GM12878 (cell line): ENCODE measurements at regions of chr2 and their contacts with region 1.

Region 1: DNA sequence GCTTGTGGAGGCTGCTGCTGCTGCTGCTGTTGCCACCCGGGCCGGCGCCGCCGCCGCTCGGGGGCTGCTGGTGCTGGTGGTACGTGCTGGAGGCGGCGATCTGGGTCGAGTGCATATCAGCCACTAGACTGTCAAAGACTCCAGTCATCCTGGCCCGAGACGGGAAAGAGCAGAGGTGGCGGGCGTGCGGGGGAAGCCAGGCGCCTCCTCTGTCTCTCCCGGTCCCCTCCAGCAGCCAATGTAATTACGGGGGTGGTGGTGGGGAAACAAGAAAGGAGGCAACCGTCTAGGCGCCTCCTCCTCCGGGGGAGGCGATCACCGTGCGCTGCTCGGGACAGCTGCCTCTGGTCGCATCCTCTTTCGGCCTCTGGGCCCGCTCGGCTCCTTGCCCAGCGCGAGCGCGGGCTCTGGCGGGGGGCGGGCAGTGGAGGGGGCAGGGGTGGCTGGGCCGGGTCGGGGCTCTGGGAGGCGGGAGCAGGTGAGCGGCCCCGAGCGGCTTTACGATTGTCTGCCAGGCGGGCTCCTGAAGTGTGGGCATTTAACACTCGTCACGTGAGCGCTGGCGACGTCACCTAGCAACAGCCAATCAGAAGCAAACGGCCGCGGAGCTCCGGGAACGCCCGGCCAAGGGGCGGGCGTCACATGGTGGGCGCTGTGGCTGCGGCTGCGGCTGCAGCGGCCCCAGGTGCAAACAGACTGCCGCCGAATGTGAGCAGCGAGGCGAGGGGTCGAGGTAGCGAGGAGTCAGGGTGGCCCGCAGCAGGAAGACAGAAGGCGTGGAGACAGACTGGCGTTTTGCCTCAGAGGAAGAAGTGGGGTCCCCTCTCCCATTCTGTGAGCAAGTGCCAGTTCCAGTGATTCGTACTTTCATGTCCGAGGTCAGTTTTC is at the start of gene DLX2:
- DNase-seq: no peak
- ATAC-seq: peak; percentile 82
- H3K4me3 ChIP-seq: peak within 1 kb of the TSS; percentile 56
- H3K27ac ChIP-seq: no peak within 1 kb of the TSS
- H3K4me1 ChIP-seq: peaks cover 30% of the 10 kb centered on the region
- H3K27me3 ChIP-seq: peaks cover 27 to 39% of the 10 kb centered on the region in 2 experiments
- CTCF ChIP-seq: no peak
- EP300 ChIP-seq: no peak
- POLR2A ChIP-seq: peak; percentile 47; the same call in 1 of the 2 replicates
- RAD21 ChIP-seq: no peak
- polyA plus RNA-seq, gene DLX2: not detected

Region 2: GRCh38 chr2:171574149-171574795 is 528.4 kb before region 1 on chr2:
- CTCF ChIA-PET with region 1: interaction called, 10 read pairs
- POLR2A ChIA-PET with region 1: no interaction called
- RAD21 ChIA-PET with region 1: interaction called, 6 read pairs
- SMC1A ChIA-PET with region 1: interaction called, 4 read pairs
- in situ Hi-C with region 1: no loop called
- intact Hi-C with region 1: loop called (anchors 2 kb)
- DNase-seq: peak; percentile 32
- ATAC-seq: peak; percentile 100
- H3K4me3 ChIP-seq: no peak overlapping the region
- H3K27ac ChIP-seq: no peak overlapping the region
- H3K4me1 ChIP-seq: no peaks in the 10 kb centered on the region
- H3K27me3 ChIP-seq: peaks cover 0 to 1% of the 10 kb centered on the region in 2 experiments; a peak in 1 of 4 replicates
- CTCF ChIP-seq: peak; percentile 94 to 97 (median 95); a peak in 5 of 6 replicates
- EP300 ChIP-seq: no peak
- POLR2A ChIP-seq: no peak
- RAD21 ChIP-seq: peak; percentile 81

Region 3: DNA sequence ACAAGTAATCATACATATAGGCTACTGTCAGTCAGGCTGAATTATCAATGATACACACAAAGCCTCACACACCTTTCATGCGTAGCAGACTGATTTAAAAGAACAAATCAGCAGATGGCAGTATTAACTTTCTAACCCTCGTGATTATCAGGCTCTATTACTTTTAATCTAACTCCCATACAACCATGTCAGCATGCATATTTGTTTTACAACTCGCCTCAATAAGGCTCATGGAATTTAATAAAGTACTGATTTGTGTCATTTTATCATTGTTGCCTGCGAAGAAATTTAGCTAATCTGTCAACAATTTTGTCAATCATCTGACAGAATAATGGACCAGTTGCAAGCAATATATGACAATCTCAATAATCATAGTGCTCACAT is 291.4 kb before region 1 on chr2:
- CTCF ChIA-PET with region 1: interaction called, 48 read pairs
- POLR2A ChIA-PET with region 1: no interaction called
- RAD21 ChIA-PET with region 1: interaction called, 3 read pairs
- SMC1A ChIA-PET with region 1: interaction called, 9 read pairs
- in situ Hi-C with region 1: loop called (anchors 25 kb)
- intact Hi-C with region 1: loop called (anchors 2 kb)
- DNase-seq: no peak
- ATAC-seq: 0 out of 3 replicates have a peak, but pooled peaks have one; percentile 25
- H3K4me3 ChIP-seq: no peak overlapping the region
- H3K27ac ChIP-seq: no peak overlapping the region
- H3K4me1 ChIP-seq: no peaks in the 10 kb centered on the region
- H3K27me3 ChIP-seq: no peaks in the 10 kb centered on the region
- CTCF ChIP-seq: peak in 2 of 3 experiments; percentile 35 to 48; a peak in 3 of 6 replicates
- EP300 ChIP-seq: no peak
- POLR2A ChIP-seq: no peak
- RAD21 ChIP-seq: peak; percentile 67

Region 4: DNA sequence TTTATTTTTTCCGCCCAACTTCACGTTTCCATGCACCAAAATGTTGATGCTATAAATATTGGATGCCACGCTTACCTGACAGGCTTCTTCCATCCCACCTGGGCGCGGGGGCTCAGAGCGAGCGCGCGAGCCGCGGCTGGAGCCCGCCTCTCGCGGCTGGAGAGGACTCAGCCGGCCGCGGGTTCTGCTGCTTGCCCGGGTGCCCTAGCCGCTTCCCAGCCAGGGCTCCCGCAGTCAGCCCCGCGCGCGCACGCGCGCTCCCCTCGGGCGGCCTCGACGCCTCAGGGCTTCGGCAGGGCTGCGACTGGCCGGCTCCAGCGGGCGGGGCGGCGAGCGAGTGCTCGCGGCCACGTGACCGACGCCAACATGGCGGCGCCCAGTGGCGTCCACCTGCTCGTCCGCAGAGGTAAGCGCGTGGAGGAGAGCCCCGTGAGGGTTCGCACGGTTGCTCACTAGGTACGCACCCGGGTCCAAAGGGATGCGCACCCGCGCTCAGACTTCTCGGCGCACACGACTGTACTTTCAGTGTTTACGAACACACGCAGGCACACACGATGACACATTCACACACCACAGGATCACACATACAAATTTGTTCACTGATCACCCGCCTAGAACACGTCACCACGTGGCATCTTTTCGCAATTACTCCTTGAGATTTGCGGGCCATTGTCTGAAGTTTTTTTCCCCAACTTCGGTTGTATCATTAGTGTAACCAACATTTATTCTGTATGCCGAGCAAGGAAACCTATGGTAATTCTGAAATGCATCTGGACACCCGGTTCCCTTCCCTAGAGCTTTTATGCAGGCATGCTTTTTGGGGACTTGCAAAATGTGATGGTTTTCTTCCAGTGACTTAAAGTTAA is 102.8 kb before region 1 on chr2 and contains the start of gene METAP1D:
- CTCF ChIA-PET with region 1: interaction called, 3 read pairs
- POLR2A ChIA-PET with region 1: no interaction called
- RAD21 ChIA-PET with region 1: no interaction called
- SMC1A ChIA-PET with region 1: interaction called, 3 read pairs
- in situ Hi-C with region 1: no loop called
- intact Hi-C with region 1: loop called (anchors 5 kb)
- DNase-seq: peak; percentile 70
- ATAC-seq: peak; percentile 99
- H3K4me3 ChIP-seq: peak within 1 kb of the TSS; percentile 90
- H3K27ac ChIP-seq: peak within 1 kb of the TSS; percentile 78
- H3K4me1 ChIP-seq: peaks cover 6% of the 10 kb centered on the region
- H3K27me3 ChIP-seq: no peaks in the 10 kb centered on the region
- CTCF ChIP-seq: no peak
- EP300 ChIP-seq: no peak
- POLR2A ChIP-seq: peak; percentile 98
- RAD21 ChIP-seq: no peak
- polyA plus RNA-seq, gene METAP1D: 4.6 to 5.9 TPM

Region 5: DNA sequence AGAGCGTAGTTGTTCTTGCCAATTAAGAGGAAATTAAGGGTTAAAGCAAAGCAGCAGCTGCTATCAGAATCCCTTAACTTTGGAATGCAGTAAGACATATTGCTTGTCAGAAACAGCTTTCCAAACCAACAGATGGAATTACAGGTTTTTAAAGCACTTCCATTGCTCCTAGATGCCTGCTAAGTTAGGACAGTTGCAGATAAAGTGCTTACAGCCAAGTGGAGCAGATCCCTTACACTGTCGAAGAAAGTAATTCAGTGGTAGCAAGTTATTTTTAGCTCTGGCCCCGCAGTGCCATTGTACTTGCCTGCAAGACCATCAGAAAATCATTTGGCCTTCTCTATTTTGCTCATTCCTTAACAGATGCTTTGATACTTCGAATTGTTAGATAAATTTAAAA is 458.6 kb after region 1 on chr2:
- CTCF ChIA-PET with region 1: no interaction called
- POLR2A ChIA-PET with region 1: no interaction called
- RAD21 ChIA-PET with region 1: no interaction called
- SMC1A ChIA-PET with region 1: no interaction called
- in situ Hi-C with region 1: no loop called
- intact Hi-C with region 1: no loop called
- DNase-seq: no peak
- ATAC-seq: no peak
- H3K4me3 ChIP-seq: no peak overlapping the region
- H3K27ac ChIP-seq: no peak overlapping the region
- H3K4me1 ChIP-seq: no peaks in the 10 kb centered on the region; the same call in 1 of the 2 replicates
- H3K27me3 ChIP-seq: no peaks in the 10 kb centered on the region
- CTCF ChIP-seq: no peak
- EP300 ChIP-seq: no peak
- POLR2A ChIP-seq: no peak
- RAD21 ChIP-seq: no peak